ENCODE measurements at regions of chr9 and their contacts with region 1.

Region 1: DNA sequence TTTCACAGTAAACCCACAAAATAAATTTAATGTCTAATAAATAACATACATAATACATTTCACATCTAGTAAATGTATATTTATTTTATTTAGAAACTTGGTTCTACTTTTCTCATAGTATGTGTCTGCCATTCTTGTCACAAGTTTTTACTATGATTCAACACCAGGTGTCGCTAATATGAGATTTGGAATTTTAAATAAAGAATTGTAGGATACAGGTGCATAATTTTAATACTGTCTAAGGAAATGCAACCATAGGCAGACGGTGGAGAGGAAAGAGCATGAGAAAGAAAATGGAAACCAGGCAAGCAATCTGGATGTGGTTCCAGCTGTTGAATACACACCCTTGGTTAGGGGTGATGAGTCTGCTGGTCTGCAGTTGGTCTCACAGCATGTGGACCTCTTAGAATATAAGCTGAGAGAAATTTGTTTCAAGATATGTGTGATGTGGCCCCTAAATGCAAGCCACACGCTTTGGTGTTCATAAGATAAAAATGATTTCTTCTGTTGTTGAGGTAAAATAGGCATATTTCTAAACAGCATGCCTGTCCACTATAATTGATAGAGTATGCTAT is 114.7 kb upstream of the TXNDC8 start:
- DNase-seq: no peak
- H3K4me3 ChIP-seq: no peak overlapping the region
- H3K27ac ChIP-seq: no peak overlapping the region
- H3K4me1 ChIP-seq: peaks cover 0 to 4% (median 0%) of the 10 kb centered on the region in 4 donors
- H3K27me3 ChIP-seq: no peaks in the 10 kb centered on the region
- CTCF ChIP-seq: peak; percentile 37 to 54 (median 46)
- EP300 ChIP-seq: no peak
- POLR2A ChIP-seq: no peak

Region 2: GRCh38 chr9:110579862-110580219 is 127.5 kb after region 1 on chr9:
- intact Hi-C with region 1: loop called (anchors 5 kb)
- DNase-seq: no peak
- H3K4me3 ChIP-seq: peak overlapping the region; percentile 61 to 77 (median 64)
- H3K27ac ChIP-seq: peak overlapping the region; percentile 82 to 83 (median 82)
- H3K4me1 ChIP-seq: peaks cover 11 to 23% (median 21%) of the 10 kb centered on the region in 4 donors
- H3K27me3 ChIP-seq: peaks cover 0 to 20% (median 5%) of the 10 kb centered on the region in 4 donors
- CTCF ChIP-seq: no peak
- EP300 ChIP-seq: no peak
- POLR2A ChIP-seq: no peak

Region 3: DNA sequence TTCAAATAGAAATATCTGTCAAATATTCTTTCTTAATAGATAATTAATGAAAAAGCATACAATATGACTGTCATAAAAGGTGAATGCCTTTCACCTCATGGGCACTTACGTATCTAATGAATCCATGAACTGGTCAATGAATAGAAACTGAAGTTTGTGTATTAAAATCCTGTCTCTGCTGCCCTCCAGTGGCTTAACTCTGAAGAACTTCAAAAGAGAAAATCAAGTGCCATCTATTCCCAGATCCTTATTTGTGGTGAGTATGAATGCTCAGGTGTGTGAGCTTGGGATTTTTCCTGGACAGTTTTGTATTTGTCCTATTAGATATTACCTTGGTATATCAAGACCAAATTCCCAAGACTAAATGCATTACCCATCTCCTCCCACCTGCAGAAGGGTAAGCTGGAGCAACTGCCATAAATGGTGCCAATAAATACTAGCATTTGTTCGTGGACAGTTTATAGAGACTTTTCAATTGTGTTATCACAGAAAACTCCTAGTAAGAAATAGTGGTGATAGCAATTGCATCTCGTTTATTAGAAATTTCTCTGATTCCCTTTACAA is 171.2 kb after region 1 on chr9:
- intact Hi-C with region 1: loop called (anchors 5 kb)
- DNase-seq: no peak
- H3K4me3 ChIP-seq: no peak overlapping the region
- H3K27ac ChIP-seq: no peak overlapping the region
- H3K4me1 ChIP-seq: no peaks in the 10 kb centered on the region
- H3K27me3 ChIP-seq: no peaks in the 10 kb centered on the region
- CTCF ChIP-seq: peak; percentile 58 to 74 (median 68)
- EP300 ChIP-seq: no peak
- POLR2A ChIP-seq: no peak

Measured in esophagus muscularis mucosa (tissue), 4 donors.